Caki2 (cell line): ENCODE measurements at regions of chr12 and their contacts with region 1.

Region 1: GRCh38 chr12:54214553-54215406 is 26.0 kb upstream of the SMUG1 start:
- DNase-seq: peak; percentile 87

Region 2: GRCh38 chr12:54005853-54006686 is 208.7 kb before region 1 on chr12:
- in situ Hi-C with region 1: loop called (anchors 25 kb)
- DNase-seq: peak; percentile 67